Transverse colon (tissue), 4 donors: ENCODE measurements at regions of chr15 and their contacts with region 1.

Region 1: GRCh38 chr15:69583626-69584025 is 131.0 kb downstream of the RPLP1 start:
- DNase-seq: no peak
- H3K4me3 ChIP-seq: no peak overlapping the region
- H3K27ac ChIP-seq: no peak overlapping the region
- H3K4me1 ChIP-seq: peaks cover 0 to 18% (median 14%) of the 10 kb centered on the region in 4 donors
- H3K27me3 ChIP-seq: peaks cover 6% of the 10 kb centered on the region
- CTCF ChIP-seq: no peak
- EP300 ChIP-seq: no peak
- POLR2A ChIP-seq: no peak

Region 2: GRCh38 chr15:69535101-69535638 is 48.5 kb before region 1 on chr15:
- in situ Hi-C with region 1: no loop called
- intact Hi-C with region 1: no loop called
- DNase-seq: no peak
- H3K4me3 ChIP-seq: no peak overlapping the region
- H3K27ac ChIP-seq: no peak overlapping the region
- H3K4me1 ChIP-seq: no peaks in the 10 kb centered on the region
- H3K27me3 ChIP-seq: no peaks in the 10 kb centered on the region
- CTCF ChIP-seq: no peak
- EP300 ChIP-seq: no peak
- POLR2A ChIP-seq: no peak

Region 3: GRCh38 chr15:70451821-70452653 is 868.4 kb after region 1 on chr15:
- in situ Hi-C with region 1: no loop called
- intact Hi-C with region 1: loop called (anchors 2 kb)
- DNase-seq: peak; percentile 47
- H3K4me3 ChIP-seq: no peak overlapping the region
- H3K27ac ChIP-seq: no peak overlapping the region
- H3K4me1 ChIP-seq: peaks cover 0 to 17% (median 5%) of the 10 kb centered on the region in 4 donors
- H3K27me3 ChIP-seq: peaks cover 12% of the 10 kb centered on the region
- CTCF ChIP-seq: no peak
- EP300 ChIP-seq: no peak
- POLR2A ChIP-seq: no peak

Region 4: GRCh38 chr15:70947351-70948335 is 1364.0 kb after region 1 on chr15:
- in situ Hi-C with region 1: no loop called
- intact Hi-C with region 1: no loop called
- DNase-seq: no peak
- H3K4me3 ChIP-seq: no peak overlapping the region
- H3K27ac ChIP-seq: no peak overlapping the region
- H3K4me1 ChIP-seq: no peaks in the 10 kb centered on the region
- H3K27me3 ChIP-seq: no peaks in the 10 kb centered on the region
- CTCF ChIP-seq: no peak
- EP300 ChIP-seq: no peak
- POLR2A ChIP-seq: no peak